IMR-90 (cell line): ENCODE measurements at regions of chr14 and their contacts with region 1.

Region 1: DNA sequence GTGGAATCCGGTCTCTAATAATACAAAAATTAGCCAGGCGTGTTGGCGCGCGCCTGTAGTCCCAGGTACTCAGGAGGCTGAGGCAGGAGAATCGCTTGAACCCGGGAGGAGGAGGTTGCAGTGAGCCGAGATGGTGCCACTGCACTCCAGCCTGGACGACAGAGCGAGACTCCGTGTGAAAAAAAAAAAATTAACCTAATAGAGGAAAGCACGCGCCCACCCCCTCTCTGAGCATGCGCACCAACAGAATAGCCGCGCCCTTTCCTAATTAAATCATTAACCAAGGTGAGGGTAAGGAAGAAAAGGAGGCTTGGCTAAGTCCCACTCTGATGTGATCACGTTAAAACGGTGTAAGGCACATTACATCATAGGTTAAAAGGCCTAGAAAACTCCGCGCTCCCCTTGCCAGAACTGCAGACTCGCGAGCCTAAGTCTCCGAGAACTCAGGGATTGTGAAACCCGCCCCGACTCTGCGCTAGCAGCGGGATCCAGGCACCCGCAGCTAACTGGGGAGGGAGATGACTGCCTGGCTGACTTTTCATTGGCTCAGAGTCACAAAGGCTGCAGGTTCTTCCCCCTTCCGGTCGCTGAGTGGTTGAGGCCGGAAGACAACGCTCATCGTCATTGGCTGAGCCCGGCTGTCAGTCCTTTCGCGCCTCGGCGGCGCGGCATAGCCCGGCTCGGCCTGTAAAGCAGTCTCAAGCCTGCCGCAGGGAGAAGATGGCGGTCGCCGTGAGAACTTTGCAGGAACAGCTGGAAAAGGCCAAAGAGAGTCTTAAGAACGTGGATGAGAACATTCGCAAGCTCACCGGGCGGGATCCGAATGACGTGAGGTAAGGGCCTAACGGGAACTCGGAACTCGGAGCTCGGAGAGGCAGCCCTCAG is at the start of gene PNN:
- DNase-seq: peak; percentile 100
- ATAC-seq: peak; percentile 93
- H3K4me3 ChIP-seq: peak within 1 kb of the TSS; percentile 81
- H3K27ac ChIP-seq: peak within 1 kb of the TSS; percentile 96
- H3K4me1 ChIP-seq: no peaks in the 10 kb centered on the region; the same call in 1 of the 2 replicates
- H3K27me3 ChIP-seq: no peaks in the 10 kb centered on the region
- CTCF ChIP-seq: no peak
- POLR2A ChIP-seq: peak; percentile 97
- RAD21 ChIP-seq: no peak
- total RNA-seq, gene PNN: 14.9 and 23.6 TPM in 2 replicates

Region 2: DNA sequence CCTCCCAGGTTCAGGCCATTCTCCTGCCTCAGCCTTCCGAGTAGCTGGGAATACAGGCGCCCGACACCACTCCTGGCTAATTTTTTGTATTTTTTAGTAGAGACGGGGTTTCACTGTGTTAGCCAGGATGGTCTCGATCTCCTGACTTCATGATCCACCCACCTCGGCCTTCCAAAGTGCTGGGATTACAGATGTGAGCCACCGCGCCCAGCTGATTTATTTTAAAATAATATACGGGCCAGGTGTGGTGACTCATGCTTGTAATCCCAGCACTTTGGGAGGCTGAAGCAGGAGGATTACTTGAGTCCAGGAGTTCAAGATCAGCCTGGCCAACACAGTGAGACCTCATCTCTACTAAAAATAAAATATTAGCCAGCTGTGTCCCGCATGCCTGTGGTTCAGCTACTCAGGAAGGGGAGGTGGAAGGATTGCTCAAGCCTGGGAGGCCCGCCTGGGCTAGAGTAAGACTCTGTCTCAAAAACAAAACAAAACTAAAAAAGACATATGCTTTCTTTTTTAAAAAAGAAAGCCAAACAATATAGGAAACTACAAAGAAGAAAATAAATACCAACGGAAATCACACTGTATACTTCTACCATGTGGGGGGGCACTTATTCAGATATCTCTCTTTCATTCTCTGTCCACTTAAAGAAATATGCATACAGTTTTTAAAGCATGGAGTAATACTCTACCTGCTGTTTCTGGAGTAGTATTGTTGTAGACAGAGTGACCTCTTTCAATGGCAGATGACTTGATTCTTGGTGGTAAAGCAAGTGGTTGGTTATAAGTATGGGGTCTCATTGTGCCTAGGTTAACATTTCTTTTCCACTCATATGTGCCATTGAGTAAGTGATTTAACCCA is 58.0 kb after region 1 on chr14:
- CTCF ChIA-PET with region 1: no interaction called
- POLR2A ChIA-PET with region 1: no interaction called
- dilution Hi-C with region 1: no loop called
- in situ Hi-C with region 1: no loop called
- intact Hi-C with region 1: loop called (anchors 2 kb)
- DNase-seq: peak; percentile 78
- ATAC-seq: peak; percentile 98
- H3K4me3 ChIP-seq: no peak overlapping the region
- H3K27ac ChIP-seq: peak overlapping the region; percentile 65; the same call in 1 of the 2 replicates
- H3K4me1 ChIP-seq: peaks cover 1% of the 10 kb centered on the region; the same call in 1 of the 2 replicates
- H3K27me3 ChIP-seq: no peaks in the 10 kb centered on the region
- CTCF ChIP-seq: no peak
- POLR2A ChIP-seq: no peak
- RAD21 ChIP-seq: no peak

Region 3: DNA sequence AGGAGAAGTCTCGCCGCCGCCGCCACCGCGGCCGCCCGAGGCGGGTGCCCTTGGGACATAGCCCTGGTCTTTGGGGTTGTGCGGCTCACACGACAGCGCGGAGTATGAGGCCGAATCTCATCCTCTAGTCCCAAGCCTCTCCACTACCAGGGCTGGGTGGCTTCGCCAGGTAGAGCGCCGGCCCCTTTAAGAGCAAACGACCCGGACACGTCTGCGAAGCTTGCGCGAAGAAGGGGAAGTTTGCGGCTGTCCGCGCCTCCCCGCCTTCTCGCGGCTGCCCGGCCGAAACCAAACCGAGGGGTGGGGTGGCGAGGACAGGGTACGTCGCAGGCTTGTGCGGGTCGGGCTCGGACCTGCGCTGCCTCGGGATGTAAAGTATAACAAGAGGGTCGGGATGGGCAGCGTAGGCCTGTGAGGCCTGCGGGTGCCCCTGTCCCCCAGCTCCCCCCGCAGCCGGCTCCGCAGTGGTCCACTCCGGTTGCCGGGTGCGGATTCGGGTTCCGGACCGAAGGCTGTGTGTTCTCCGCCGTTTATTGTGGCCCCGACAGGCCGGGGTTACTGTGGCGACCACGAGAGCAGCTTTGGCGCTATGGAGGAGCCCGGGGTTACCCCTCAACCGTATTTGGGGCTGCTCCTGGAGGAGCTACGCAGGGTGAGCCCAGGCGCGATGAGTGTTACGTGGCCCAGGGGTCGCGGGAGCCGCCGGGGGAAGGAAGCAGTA is 92.2 kb after region 1 on chr14:
- CTCF ChIA-PET with region 1: no interaction called
- POLR2A ChIA-PET with region 1: no interaction called
- dilution Hi-C with region 1: no loop called
- in situ Hi-C with region 1: no loop called
- intact Hi-C with region 1: loop called (anchors 2 kb)
- DNase-seq: peak; percentile 81
- ATAC-seq: peak; percentile 95
- H3K4me3 ChIP-seq: peak overlapping the region; percentile 70
- H3K27ac ChIP-seq: peak overlapping the region; percentile 95
- H3K4me1 ChIP-seq: peaks cover 2% of the 10 kb centered on the region; the same call in 1 of the 2 replicates
- H3K27me3 ChIP-seq: no peaks in the 10 kb centered on the region
- CTCF ChIP-seq: no peak
- POLR2A ChIP-seq: peak; percentile 68
- RAD21 ChIP-seq: no peak; the same call in 1 of the 2 replicates

Region 4: DNA sequence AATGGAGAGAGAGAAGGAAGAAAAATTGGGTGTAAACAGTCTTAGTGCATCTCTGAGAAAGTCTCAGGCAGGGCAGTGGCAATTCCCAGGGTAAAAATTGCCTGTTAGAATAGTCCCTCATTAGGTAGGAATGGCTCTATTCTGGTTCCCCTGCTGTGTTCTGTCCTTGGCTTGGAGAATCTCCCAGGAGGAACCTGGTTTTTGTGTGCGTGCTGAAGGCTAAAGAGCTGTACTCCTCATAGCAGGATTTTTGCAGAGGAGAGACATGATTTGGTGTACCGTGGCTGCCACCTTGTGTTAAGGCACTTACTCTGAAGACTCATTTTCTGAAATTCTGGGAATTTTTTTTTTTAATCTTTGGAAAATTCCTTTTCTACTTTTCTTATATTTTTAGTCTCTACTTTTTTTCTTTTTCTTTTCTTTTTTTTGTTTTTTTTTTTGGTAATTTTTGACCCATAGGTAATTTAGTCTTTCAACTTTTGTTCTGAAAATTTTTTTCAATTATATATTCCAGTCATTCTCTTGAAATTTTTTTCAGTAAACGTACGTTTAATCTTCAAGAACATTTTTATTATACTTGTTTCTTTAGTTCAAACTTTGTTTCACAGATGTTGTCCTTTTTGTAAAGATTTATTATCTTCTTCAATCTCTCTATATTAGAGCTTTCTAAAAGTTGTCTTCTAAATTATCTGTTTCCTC is 193.6 kb after region 1 on chr14:
- CTCF ChIA-PET with region 1: no interaction called
- POLR2A ChIA-PET with region 1: no interaction called
- dilution Hi-C with region 1: no loop called
- in situ Hi-C with region 1: no loop called
- intact Hi-C with region 1: loop called (anchors 2 kb)
- DNase-seq: peak; percentile 78
- ATAC-seq: peak; percentile 89
- H3K4me3 ChIP-seq: no peak overlapping the region
- H3K27ac ChIP-seq: no peak overlapping the region
- H3K4me1 ChIP-seq: no peaks in the 10 kb centered on the region
- H3K27me3 ChIP-seq: no peaks in the 10 kb centered on the region
- CTCF ChIP-seq: peak; percentile 81
- POLR2A ChIP-seq: no peak
- RAD21 ChIP-seq: peak; percentile 82

Region 5: GRCh38 chr14:39432179-39432618 is 257.4 kb after region 1 on chr14 and contains the start of gene FBXO33:
- CTCF ChIA-PET with region 1: no interaction called
- POLR2A ChIA-PET with region 1: no interaction called
- dilution Hi-C with region 1: no loop called
- in situ Hi-C with region 1: no loop called
- intact Hi-C with region 1: loop called (anchors 5 kb)
- DNase-seq: peak; percentile 96
- ATAC-seq: peak; percentile 90
- H3K4me3 ChIP-seq: peak within 1 kb of the TSS; percentile 86
- H3K27ac ChIP-seq: peak within 1 kb of the TSS; percentile 97
- H3K4me1 ChIP-seq: 0 out of 2 replicates have a peak, but pooled peaks cover 2% of the 10 kb centered on the region
- H3K27me3 ChIP-seq: no peaks in the 10 kb centered on the region
- CTCF ChIP-seq: no peak
- POLR2A ChIP-seq: no peak
- RAD21 ChIP-seq: no peak
- total RNA-seq, gene FBXO33: 10.0 and 16.1 TPM in 2 replicates